H1 (cell line): ENCODE measurements at regions of chr17 and their contacts with region 1.

Region 1: GRCh38 chr17:75524953-75525719 is at the start of gene LLGL2:
- DNase-seq: peak in 1 of 2 experiments; percentile 89
- H3K4me3 ChIP-seq: peak within 1 kb of the TSS; percentile 53 to 93 (median 66)
- H3K27ac ChIP-seq: peak within 1 kb of the TSS; percentile 39; the same call in 1 of the 2 replicates
- H3K4me1 ChIP-seq: peaks cover 0 to 13% (median 4%) of the 10 kb centered on the region in 4 experiments; a peak in 6 of 7 replicates
- H3K27me3 ChIP-seq: no peaks in the 10 kb centered on the region; a peak in 1 of 7 replicates
- CTCF ChIP-seq: peak; percentile 43 to 65 (median 46)
- EP300 ChIP-seq: no peak
- POLR2A ChIP-seq: peak in 1 of 2 experiments; percentile 65; a peak in 2 of 3 replicates
- RAD21 ChIP-seq: peak in 1 of 2 experiments; percentile 30; a peak in 1 of 4 replicates
- total RNA-seq, gene LLGL2: 64.5 and 66.6 TPM in 2 replicates

Region 2: GRCh38 chr17:75476271-75476671 is 48.9 kb before region 1 on chr17:
- CTCF ChIA-PET with region 1: no interaction called
- POLR2A ChIA-PET with region 1: no interaction called
- DNase-seq: no peak
- H3K4me3 ChIP-seq: no peak overlapping the region
- H3K27ac ChIP-seq: no peak overlapping the region
- H3K4me1 ChIP-seq: peaks cover 0 to 7% (median under 1%) of the 10 kb centered on the region in 4 experiments; a peak in 4 of 7 replicates
- H3K27me3 ChIP-seq: no peaks in the 10 kb centered on the region
- CTCF ChIP-seq: no peak
- EP300 ChIP-seq: no peak
- POLR2A ChIP-seq: no peak
- RAD21 ChIP-seq: no peak

Region 3: DNA sequence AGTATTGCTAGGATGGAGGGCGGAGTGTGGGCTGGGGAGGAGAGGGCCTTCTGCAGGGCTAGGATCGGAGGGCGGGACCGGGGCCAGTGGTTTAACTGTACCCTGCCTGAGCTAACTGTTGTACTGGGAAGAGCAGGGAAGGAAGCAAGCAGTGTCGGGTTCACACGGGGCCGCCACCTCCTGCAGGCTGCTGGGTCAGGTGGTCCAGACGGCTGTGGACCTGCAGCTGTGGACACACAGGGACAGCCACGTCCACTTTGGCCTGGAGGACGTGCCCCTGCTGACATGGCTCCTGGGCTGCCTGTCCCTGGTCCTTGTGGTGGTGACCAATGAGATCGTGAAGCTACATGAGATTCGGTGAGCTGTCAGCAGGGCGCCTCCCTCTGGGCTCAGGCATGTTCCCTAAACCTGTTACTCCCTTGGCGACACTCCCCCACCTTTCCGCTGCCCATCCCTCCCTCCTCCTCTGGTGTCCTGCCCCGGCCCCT is 26.4 kb before region 1 on chr17:
- CTCF ChIA-PET with region 1: interaction called, 7 read pairs
- POLR2A ChIA-PET with region 1: interaction called, 10 read pairs
- DNase-seq: no peak
- H3K4me3 ChIP-seq: no peak overlapping the region
- H3K27ac ChIP-seq: no peak overlapping the region
- H3K4me1 ChIP-seq: no peaks in the 10 kb centered on the region
- H3K27me3 ChIP-seq: no peaks in the 10 kb centered on the region
- CTCF ChIP-seq: peak in 2 of 3 experiments; percentile 14 to 22; a peak in 2 of 4 replicates
- EP300 ChIP-seq: no peak
- POLR2A ChIP-seq: peak in 1 of 2 experiments; percentile 49; a peak in 2 of 3 replicates
- RAD21 ChIP-seq: no peak; a peak in 1 of 4 replicates

Region 4: DNA sequence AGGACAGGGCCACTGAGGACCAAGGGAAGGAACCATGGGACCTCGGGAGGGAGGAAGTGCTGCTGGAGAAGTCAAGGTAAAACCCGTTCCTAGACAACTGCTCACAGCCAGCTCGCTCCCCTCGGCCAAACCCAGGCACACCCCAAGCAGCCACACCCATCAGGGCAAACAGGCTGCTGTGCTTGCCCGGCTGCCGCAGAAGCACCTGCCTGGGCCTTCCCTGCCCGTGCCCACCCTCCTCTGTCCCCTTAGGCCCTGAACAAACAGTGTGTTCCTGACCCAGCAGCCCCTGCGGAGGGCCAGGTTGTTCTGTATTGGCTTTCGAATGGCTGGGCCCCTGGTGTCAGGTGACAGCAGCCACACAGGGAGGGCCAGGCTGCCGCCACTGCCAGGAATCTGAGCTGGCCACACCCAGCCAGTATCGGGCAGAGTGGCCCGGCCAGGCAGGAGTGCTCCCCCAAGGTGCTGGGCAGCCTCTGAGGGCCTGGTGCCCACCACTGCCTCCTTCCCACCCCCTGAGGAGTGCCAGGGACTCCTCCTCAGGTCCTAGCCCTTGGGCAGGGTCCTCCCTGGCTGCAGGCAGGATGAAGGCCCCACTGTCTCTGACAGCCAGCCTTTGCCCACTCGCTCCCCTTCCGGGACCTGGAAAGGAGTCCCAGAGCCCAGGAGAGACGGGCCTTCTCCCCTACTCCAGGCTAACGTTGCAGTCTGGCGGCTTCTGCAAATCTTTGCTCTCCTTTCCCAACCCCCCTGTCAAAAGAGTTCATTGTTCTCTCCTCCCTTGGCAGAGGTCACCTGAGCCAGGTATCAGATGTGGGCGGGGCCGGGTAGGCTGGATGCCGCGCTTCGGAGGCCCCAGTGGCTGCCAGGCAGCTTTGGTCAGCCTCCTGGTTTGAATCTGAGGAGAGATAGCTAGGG is 24.3 kb after region 1 on chr17:
- CTCF ChIA-PET with region 1: interaction called, 10 read pairs
- POLR2A ChIA-PET with region 1: interaction called, 19 read pairs
- DNase-seq: peak in 1 of 2 experiments; percentile 86
- H3K4me3 ChIP-seq: peak overlapping the region; percentile 11 to 60 (median 42); a peak in 7 of 8 replicates
- H3K27ac ChIP-seq: peak overlapping the region; percentile 87
- H3K4me1 ChIP-seq: peaks cover 10 to 22% (median 15%) of the 10 kb centered on the region in 4 experiments
- H3K27me3 ChIP-seq: no peaks in the 10 kb centered on the region
- CTCF ChIP-seq: peak in 1 of 3 experiments; percentile 6; a peak in 1 of 4 replicates
- EP300 ChIP-seq: no peak
- POLR2A ChIP-seq: no peak
- RAD21 ChIP-seq: no peak; a peak in 1 of 4 replicates